Natural killer cell (primary cell): ENCODE measurements at regions of chr1 and their contacts with region 1.

Region 1: DNA sequence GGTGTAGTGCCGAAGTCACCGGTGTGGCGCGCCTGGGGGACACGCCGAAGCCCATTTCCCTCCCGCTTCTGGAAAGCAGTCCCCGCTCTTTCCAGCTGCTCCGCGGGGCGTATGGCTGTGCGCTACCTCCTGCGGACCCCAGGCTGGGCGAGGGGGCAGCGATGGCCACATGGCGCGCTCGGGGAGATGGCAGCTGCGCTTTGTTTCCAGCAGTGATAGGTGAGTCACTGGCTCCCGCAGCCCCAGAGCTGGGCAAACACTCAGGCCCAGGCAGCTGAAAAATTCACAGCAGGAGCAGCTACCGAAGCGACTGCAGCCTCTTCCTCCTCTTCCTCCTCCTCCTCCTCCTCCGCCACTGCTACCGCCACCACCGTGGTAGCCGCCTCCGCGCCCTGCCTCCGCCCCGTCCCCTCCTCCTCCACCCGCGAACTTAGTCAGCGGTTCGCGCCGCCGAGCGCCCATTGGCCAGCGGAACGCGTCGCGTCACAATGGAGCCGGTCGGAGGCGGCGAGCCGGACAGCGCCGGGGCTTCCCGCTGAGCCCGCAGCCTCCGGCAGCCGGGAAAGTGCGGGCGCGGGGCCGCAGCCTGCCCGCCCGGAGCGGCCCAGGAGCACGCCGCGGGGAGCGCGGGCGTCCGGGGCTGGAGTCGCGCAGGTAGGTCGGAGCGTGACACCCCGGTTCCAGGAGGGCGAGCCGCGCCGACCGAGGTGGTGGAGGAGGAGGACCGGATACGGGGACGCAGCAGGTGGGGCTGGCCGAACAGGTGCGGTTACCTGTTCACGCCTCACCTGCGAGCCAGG is at the start of gene LRRC8B:
- DNase-seq: peak; percentile 87 to 94
- ATAC-seq: peak; percentile 86 to 96 (median 93)
- H3K4me3 ChIP-seq: peak within 1 kb of the TSS; percentile 86
- H3K4me3 Mint-ChIP-seq: peak within 1 kb of the TSS; percentile 89
- H3K27ac ChIP-seq: peak within 1 kb of the TSS; percentile 93
- H3K27ac Mint-ChIP-seq: peak within 1 kb of the TSS; percentile 80 to 90
- H3K4me1 ChIP-seq: peaks cover 14% of the 10 kb centered on the region
- H3K4me1 Mint-ChIP-seq: peaks cover 8 to 15% of the 10 kb centered on the region in 2 donors
- H3K27me3 ChIP-seq: no peaks in the 10 kb centered on the region
- H3K27me3 Mint-ChIP-seq: no peaks in the 10 kb centered on the region
- CTCF ChIP-seq: no peak
- total RNA-seq, gene LRRC8B: 1.7 to 2.9 (median 2.9) TPM

Region 2: GRCh38 chr1:88990426-88990825 is 534.1 kb before region 1 on chr1:
- intact Hi-C with region 1: loop called (anchors 1 kb)
- DNase-seq: no peak
- ATAC-seq: no peak
- H3K4me3 ChIP-seq: no peak overlapping the region
- H3K4me3 Mint-ChIP-seq: no peak overlapping the region
- H3K27ac ChIP-seq: no peak overlapping the region
- H3K27ac Mint-ChIP-seq: peak overlapping the region in 1 of 2 donors; percentile 26
- H3K4me1 ChIP-seq: peaks cover 18% of the 10 kb centered on the region
- H3K4me1 Mint-ChIP-seq: peaks cover 28 to 41% of the 10 kb centered on the region in 2 donors
- H3K27me3 ChIP-seq: no peaks in the 10 kb centered on the region
- H3K27me3 Mint-ChIP-seq: no peaks in the 10 kb centered on the region
- CTCF ChIP-seq: no peak

Region 3: DNA sequence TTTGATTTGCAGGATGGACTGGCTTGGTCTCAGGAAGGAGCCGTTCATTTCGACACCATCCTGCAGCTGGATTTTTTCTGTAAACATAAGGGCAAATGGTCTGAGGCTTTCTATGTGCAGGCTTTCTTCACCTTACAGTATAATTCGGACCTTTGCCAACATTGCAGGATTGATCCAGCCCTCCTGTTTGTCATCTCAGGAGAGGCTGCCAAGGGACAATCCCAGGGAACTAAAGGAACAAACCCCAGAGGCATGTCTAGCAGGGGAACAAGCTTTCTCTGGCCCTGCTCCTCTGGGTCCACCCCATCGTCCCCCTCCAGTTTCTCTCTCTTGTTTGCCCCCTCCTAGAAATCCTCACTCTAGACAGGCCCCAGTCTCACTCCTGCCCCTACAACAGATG is 185.5 kb before region 1 on chr1:
- intact Hi-C with region 1: no loop called
- DNase-seq: no peak
- ATAC-seq: no peak
- H3K4me3 ChIP-seq: no peak overlapping the region
- H3K4me3 Mint-ChIP-seq: no peak overlapping the region
- H3K27ac ChIP-seq: no peak overlapping the region
- H3K27ac Mint-ChIP-seq: no peak overlapping the region
- H3K4me1 ChIP-seq: no peaks in the 10 kb centered on the region
- H3K4me1 Mint-ChIP-seq: peaks cover 4 to 6% of the 10 kb centered on the region in 2 donors
- H3K27me3 ChIP-seq: no peaks in the 10 kb centered on the region
- H3K27me3 Mint-ChIP-seq: no peaks in the 10 kb centered on the region
- CTCF ChIP-seq: no peak

Region 4: GRCh38 chr1:89598450-89599331 is 74.1 kb after region 1 on chr1:
- intact Hi-C with region 1: loop called (anchors 1 kb)
- DNase-seq: peak in 1 of 2 donors; percentile 71
- ATAC-seq: peak; percentile 62 to 82 (median 67)
- H3K4me3 ChIP-seq: no peak overlapping the region
- H3K4me3 Mint-ChIP-seq: no peak overlapping the region
- H3K27ac ChIP-seq: no peak overlapping the region
- H3K27ac Mint-ChIP-seq: peak overlapping the region in 1 of 2 donors; percentile 2
- H3K4me1 ChIP-seq: no peaks in the 10 kb centered on the region
- H3K4me1 Mint-ChIP-seq: peaks cover 7 to 8% of the 10 kb centered on the region in 2 donors
- H3K27me3 ChIP-seq: no peaks in the 10 kb centered on the region
- H3K27me3 Mint-ChIP-seq: no peaks in the 10 kb centered on the region
- CTCF ChIP-seq: peak; percentile 80